Heart left ventricle (tissue), 16 donors: ENCODE measurements at regions of chr5 and their contacts with region 1.

Region 1: GRCh38 chr5:132526290-132526973 is 16.9 kb downstream of the IL5 start:
- DNase-seq: peak in 2 of 5 donors; percentile 17 to 23
- ATAC-seq: peak; percentile 20 to 83 (median 79)
- H3K4me3 ChIP-seq: no peak overlapping the region
- H3K27ac ChIP-seq: no peak overlapping the region
- H3K4me1 ChIP-seq: peaks cover 0 to 6% (median 0%) of the 10 kb centered on the region in 12 donors
- H3K27me3 ChIP-seq: no peaks in the 10 kb centered on the region
- CTCF ChIP-seq: peak; percentile 74 to 84 (median 80)
- POLR2A ChIP-seq: no peak

Region 2: GRCh38 chr5:132446669-132447068 is 79.8 kb before region 1 on chr5:
- intact Hi-C with region 1: no loop called
- DNase-seq: peak in 4 of 5 donors; percentile 82 to 89 (median 84)
- ATAC-seq: peak; percentile 87 to 91 (median 90)
- H3K4me3 ChIP-seq: no peak overlapping the region
- H3K27ac ChIP-seq: peak overlapping the region in 11 of 12 donors; percentile 38 to 77 (median 68)
- H3K4me1 ChIP-seq: peaks cover 17 to 70% (median 56%) of the 10 kb centered on the region in 12 donors
- H3K27me3 ChIP-seq: no peaks in the 10 kb centered on the region
- CTCF ChIP-seq: no peak
- POLR2A ChIP-seq: no peak

Region 3: GRCh38 chr5:132714456-132715307 is 188.2 kb after region 1 on chr5:
- intact Hi-C with region 1: loop called in 3 of 10 experiments (anchors 10 kb)
- DNase-seq: no peak
- ATAC-seq: no peak
- H3K4me3 ChIP-seq: no peak overlapping the region
- H3K27ac ChIP-seq: no peak overlapping the region
- H3K4me1 ChIP-seq: peaks cover 0 to 4% (median 0%) of the 10 kb centered on the region in 12 donors
- H3K27me3 ChIP-seq: no peaks in the 10 kb centered on the region
- CTCF ChIP-seq: peak in 11 of 12 donors; percentile 17 to 56 (median 41)
- POLR2A ChIP-seq: no peak

Region 4: GRCh38 chr5:132807163-132807838 is 280.9 kb after region 1 on chr5:
- intact Hi-C with region 1: loop called in 5 of 10 experiments (anchors 10 kb)
- DNase-seq: no peak
- ATAC-seq: no peak
- H3K4me3 ChIP-seq: no peak overlapping the region
- H3K27ac ChIP-seq: no peak overlapping the region
- H3K4me1 ChIP-seq: peaks cover 0 to under 1% (median 0%) of the 10 kb centered on the region in 12 donors
- H3K27me3 ChIP-seq: peaks cover 9 to 45% (median 22%) of the 10 kb centered on the region in 9 donors
- CTCF ChIP-seq: no peak
- POLR2A ChIP-seq: no peak